Gastrocnemius medialis (tissue), 4 donors: ENCODE measurements at regions of chr22 and their contacts with region 1.

Region 1: GRCh38 chr22:24302591-24302990 is 32.0 kb downstream of the SPECC1L start:
- DNase-seq: no peak
- ATAC-seq: no peak
- H3K4me3 ChIP-seq: no peak overlapping the region
- H3K27ac ChIP-seq: peak overlapping the region; percentile 63 to 88 (median 78)
- H3K4me1 ChIP-seq: peaks cover 41 to 55% of the 10 kb centered on the region in 2 donors
- H3K27me3 ChIP-seq: no peaks in the 10 kb centered on the region
- CTCF ChIP-seq: no peak
- POLR2A ChIP-seq: no peak

Region 2: GRCh38 chr22:24270638-24271408 is 31.8 kb before region 1 on chr22 and contains the start of gene SPECC1L:
- in situ Hi-C with region 1: no loop called
- intact Hi-C with region 1: loop called (anchors 1 kb)
- DNase-seq: peak; percentile 90 to 94
- ATAC-seq: peak; percentile 93 to 94
- H3K4me3 ChIP-seq: peak within 1 kb of the TSS; percentile 76 to 99 (median 82)
- H3K27ac ChIP-seq: peak within 1 kb of the TSS; percentile 87 to 96 (median 92)
- H3K4me1 ChIP-seq: peaks cover 38 to 39% of the 10 kb centered on the region in 2 donors
- H3K27me3 ChIP-seq: no peaks in the 10 kb centered on the region
- CTCF ChIP-seq: peak in 3 of 5 experiments; percentile 20 to 47 (median 31)
- POLR2A ChIP-seq: peak; percentile 96 to 99
- total RNA-seq, gene SPECC1L: 16.2 to 19.9 (median 18.7) TPM

Region 3: DNA sequence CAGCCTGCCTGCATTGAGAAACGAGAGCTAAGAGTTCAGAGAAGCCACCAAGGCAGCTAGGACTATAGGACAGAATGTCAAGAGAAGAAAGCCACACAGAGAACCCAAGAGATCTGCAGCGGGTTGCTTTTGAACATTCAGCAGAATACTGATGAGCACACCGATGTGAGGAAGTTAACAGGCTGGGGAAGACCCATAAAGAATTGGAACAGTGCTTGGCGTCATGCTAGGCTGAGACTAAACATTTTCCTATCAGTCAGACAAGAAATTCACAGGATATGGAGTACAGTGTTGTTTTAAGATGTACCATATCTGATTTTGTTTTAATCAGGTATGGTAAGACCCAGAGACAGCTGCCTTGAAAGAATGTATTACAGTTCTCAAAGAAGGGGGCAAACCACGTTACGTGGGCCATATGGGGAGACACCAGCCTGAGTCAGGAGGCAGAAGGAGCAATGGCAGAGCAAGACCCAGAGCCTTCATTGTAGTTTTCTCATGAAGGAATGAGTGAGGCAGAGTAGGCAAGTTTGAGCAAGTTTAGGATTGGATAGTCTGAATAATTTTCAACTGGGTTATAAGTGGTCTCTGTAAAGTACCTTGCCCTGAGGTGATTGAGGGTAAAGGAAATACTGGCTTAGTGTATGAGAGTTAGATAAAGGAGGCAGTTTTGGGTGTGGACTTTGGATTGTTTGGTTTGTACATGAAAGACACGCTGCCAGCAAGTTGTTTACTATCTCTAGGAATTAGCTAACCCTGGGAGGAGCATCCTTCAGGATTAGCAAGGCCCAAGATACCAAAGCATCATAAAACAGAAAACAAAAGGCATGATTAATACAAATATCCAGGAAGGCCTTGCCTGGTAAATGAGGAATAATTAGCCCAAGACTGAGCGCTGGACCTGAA is 276.0 kb after region 1 on chr22:
- in situ Hi-C with region 1: no loop called
- intact Hi-C with region 1: no loop called
- DNase-seq: no peak
- ATAC-seq: no peak
- H3K4me3 ChIP-seq: no peak overlapping the region
- H3K27ac ChIP-seq: no peak overlapping the region
- H3K4me1 ChIP-seq: no peaks in the 10 kb centered on the region
- H3K27me3 ChIP-seq: no peaks in the 10 kb centered on the region
- CTCF ChIP-seq: no peak
- POLR2A ChIP-seq: no peak